ENCODE measurements at regions of chr4 and their contacts with region 1.

Region 1: GRCh38 chr4:87422104-87423052 is at the start of gene NUDT9:
- DNase-seq: peak; percentile 76 to 82 (median 79)
- H3K4me3 ChIP-seq: peak within 1 kb of the TSS; percentile 87 to 91 (median 91)
- H3K4me3 Mint-ChIP-seq: peak within 1 kb of the TSS; percentile 98
- H3K27ac ChIP-seq: peak within 1 kb of the TSS; percentile 89 to 95
- H3K27ac Mint-ChIP-seq: peak within 1 kb of the TSS; percentile 96 to 99 (median 99)
- H3K4me1 ChIP-seq: peaks cover 17% of the 10 kb centered on the region in 2 donors
- H3K4me1 Mint-ChIP-seq: peaks cover 14% of the 10 kb centered on the region
- H3K27me3 ChIP-seq: no peaks in the 10 kb centered on the region
- H3K27me3 Mint-ChIP-seq: peaks cover 0 to 3% (median 0%) of the 10 kb centered on the region in 3 donors
- CTCF ChIP-seq: no peak
- polyA plus RNA-seq, gene NUDT9: 9.6 to 14.3 (median 12.5) TPM

Region 2: GRCh38 chr4:87388901-87389300 is 33.5 kb before region 1 on chr4:
- intact Hi-C with region 1: loop called in 1 of 2 experiments (anchors 5 kb)
- DNase-seq: peak in 2 of 3 donors; percentile 40 to 67
- H3K4me3 ChIP-seq: peak overlapping the region; percentile 94 to 98 (median 97)
- H3K4me3 Mint-ChIP-seq: peak overlapping the region; percentile 86 to 98
- H3K27ac ChIP-seq: peak overlapping the region; percentile 56 to 77
- H3K27ac Mint-ChIP-seq: peak overlapping the region; percentile 90 to 95 (median 95)
- H3K4me1 ChIP-seq: peaks cover 28 to 53% of the 10 kb centered on the region in 2 donors
- H3K4me1 Mint-ChIP-seq: peaks cover 50% of the 10 kb centered on the region
- H3K27me3 ChIP-seq: no peaks in the 10 kb centered on the region
- H3K27me3 Mint-ChIP-seq: peaks cover 0 to 2% (median 0%) of the 10 kb centered on the region in 3 donors
- CTCF ChIP-seq: no peak